PC-9 (cell line): ENCODE measurements at regions of chr15 and their contacts with region 1.

Region 1: DNA sequence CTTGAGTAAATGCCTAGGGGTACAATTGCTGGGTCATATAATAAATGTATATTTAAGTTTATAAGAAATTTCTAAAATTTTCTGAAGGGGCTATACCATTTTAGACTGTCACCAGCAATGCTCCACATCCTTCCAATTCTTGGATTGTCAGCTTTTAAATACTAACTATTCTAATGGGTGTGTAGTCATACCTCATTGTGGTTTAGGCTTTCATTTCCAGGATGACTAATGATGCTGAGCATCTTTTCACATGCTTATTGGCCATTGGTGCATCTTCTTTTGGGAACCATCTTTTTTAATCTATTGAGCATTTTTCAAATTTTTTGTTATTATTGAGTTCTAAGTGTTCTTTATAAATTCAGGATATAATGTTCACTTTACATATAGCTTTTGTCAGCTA is 52.5 kb upstream of the CORO2B start:
- DNase-seq: no peak
- H3K4me3 ChIP-seq: no peak overlapping the region
- H3K27ac ChIP-seq: no peak overlapping the region
- H3K4me1 ChIP-seq: no peaks in the 10 kb centered on the region
- H3K27me3 ChIP-seq: peaks cover 3% of the 10 kb centered on the region; the same call in 1 of the 2 replicates
- CTCF ChIP-seq: no peak

Region 2: GRCh38 chr15:68316061-68316804 is 210.0 kb before region 1 on chr15:
- CTCF ChIA-PET with region 1: no interaction called
- POLR2A ChIA-PET with region 1: no interaction called
- intact Hi-C with region 1: no loop called
- DNase-seq: no peak
- H3K4me3 ChIP-seq: no peak overlapping the region
- H3K27ac ChIP-seq: no peak overlapping the region
- H3K4me1 ChIP-seq: no peaks in the 10 kb centered on the region
- H3K27me3 ChIP-seq: no peaks in the 10 kb centered on the region
- CTCF ChIP-seq: no peak; the same call in 1 of the 2 replicates

Region 3: GRCh38 chr15:68441045-68441743 is 85.1 kb before region 1 on chr15:
- CTCF ChIA-PET with region 1: no interaction called
- POLR2A ChIA-PET with region 1: no interaction called
- intact Hi-C with region 1: loop called (anchors 10 kb)
- DNase-seq: no peak
- H3K4me3 ChIP-seq: no peak overlapping the region
- H3K27ac ChIP-seq: no peak overlapping the region
- H3K4me1 ChIP-seq: no peaks in the 10 kb centered on the region
- H3K27me3 ChIP-seq: peaks cover 53% of the 10 kb centered on the region
- CTCF ChIP-seq: no peak

Region 4: GRCh38 chr15:68543165-68544008 is 17.1 kb after region 1 on chr15:
- CTCF ChIA-PET with region 1: interaction called, 3 read pairs
- POLR2A ChIA-PET with region 1: interaction called, 12 read pairs
- intact Hi-C with region 1: no loop called
- DNase-seq: no peak
- H3K4me3 ChIP-seq: no peak overlapping the region
- H3K27ac ChIP-seq: no peak overlapping the region
- H3K4me1 ChIP-seq: no peaks in the 10 kb centered on the region
- H3K27me3 ChIP-seq: no peaks in the 10 kb centered on the region
- CTCF ChIP-seq: no peak

Region 5: DNA sequence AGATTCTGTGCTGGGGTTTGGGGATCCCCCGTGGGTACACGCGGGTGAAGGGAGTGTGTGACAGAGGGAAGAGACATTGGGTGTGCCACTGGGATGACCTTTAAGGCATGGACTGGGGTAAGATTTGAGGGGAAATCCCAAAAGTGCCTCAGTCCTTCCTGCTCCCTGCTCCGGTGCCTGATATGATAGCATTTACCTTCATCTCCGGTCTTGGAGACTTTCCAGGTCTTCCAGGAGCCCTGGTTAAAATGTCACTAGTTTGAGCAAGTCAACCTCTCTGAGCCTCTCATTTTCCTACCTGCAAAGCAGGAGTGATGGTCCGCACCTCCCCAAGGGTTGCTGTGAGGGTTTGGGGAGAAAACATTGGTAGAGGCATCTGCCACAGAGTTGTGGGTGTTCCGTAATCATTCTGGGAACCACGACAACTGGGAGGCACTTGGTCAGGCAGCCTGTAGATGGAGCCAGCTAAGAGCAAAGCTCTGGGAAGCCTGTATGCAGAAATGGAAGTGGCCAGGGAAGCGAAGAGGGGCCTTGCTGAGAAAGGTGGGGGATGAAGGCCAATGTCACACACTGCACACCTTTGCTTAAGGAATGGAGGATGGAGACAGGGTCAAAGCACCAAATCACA is 853.9 kb after region 1 on chr15:
- CTCF ChIA-PET with region 1: no interaction called
- POLR2A ChIA-PET with region 1: no interaction called
- intact Hi-C with region 1: no loop called
- DNase-seq: no peak
- H3K4me3 ChIP-seq: no peak overlapping the region
- H3K27ac ChIP-seq: no peak overlapping the region
- H3K4me1 ChIP-seq: no peaks in the 10 kb centered on the region
- H3K27me3 ChIP-seq: no peaks in the 10 kb centered on the region
- CTCF ChIP-seq: no peak